ENCODE measurements at regions of chr7 and their contacts with region 1.

Region 1: DNA sequence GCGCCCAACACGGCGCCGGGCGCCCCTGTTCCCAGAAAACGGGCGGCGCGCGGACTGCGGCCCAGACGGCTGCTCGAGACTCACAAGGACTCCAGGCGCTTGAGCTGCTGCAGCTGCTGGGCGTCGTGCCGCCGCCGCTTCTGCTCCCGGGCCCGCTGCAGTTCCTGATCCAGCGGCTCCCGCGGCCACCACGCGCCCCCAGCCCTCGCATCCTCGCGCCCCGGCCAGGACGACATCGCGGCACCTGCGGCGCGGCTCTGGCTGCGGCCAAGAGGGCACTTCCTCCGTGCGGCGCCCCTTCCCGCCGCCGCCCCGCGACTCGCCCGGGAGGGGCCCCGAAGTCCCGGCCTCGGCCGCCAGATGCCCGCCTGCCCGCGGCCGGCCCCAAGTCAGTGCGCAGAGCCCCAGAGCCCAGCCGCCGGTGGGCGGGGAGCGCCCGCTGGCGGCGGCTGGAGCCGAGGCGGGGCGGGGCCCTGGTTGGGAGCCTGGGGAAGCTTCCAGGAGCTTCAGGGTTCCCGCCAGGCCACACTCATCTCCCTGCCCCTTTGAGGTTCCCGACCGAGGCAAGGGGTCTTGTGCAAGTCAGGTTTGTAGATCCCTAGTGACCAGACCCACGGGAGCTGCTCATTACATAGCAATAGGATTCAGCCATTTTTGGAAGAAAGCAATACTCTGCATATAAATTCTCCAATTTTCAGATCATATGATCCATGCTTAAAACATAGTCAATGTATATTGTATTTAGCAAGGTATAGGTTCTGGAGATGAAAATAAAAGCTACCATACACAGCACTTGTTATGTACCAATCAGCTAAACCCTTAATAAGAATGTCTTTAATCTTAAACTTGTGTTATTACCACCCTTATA is 14.2 kb upstream of the FKBP9 start:
- DNase-seq: peak; percentile 25 to 81 (median 67)
- ATAC-seq: peak; percentile 86
- H3K4me3 ChIP-seq: peak overlapping the region; percentile 55 to 66
- H3K4me3 Mint-ChIP-seq: peak overlapping the region; percentile 78
- H3K27ac ChIP-seq: peak overlapping the region in 1 of 2 experiments; percentile 30
- H3K27ac Mint-ChIP-seq: no peak overlapping the region
- H3K4me1 ChIP-seq: peaks cover 16% of the 10 kb centered on the region
- H3K4me1 Mint-ChIP-seq: peaks cover 8% of the 10 kb centered on the region
- H3K27me3 ChIP-seq: no peaks in the 10 kb centered on the region
- H3K27me3 Mint-ChIP-seq: peaks cover 10% of the 10 kb centered on the region
- CTCF ChIP-seq: peak; percentile 74

Region 2: DNA sequence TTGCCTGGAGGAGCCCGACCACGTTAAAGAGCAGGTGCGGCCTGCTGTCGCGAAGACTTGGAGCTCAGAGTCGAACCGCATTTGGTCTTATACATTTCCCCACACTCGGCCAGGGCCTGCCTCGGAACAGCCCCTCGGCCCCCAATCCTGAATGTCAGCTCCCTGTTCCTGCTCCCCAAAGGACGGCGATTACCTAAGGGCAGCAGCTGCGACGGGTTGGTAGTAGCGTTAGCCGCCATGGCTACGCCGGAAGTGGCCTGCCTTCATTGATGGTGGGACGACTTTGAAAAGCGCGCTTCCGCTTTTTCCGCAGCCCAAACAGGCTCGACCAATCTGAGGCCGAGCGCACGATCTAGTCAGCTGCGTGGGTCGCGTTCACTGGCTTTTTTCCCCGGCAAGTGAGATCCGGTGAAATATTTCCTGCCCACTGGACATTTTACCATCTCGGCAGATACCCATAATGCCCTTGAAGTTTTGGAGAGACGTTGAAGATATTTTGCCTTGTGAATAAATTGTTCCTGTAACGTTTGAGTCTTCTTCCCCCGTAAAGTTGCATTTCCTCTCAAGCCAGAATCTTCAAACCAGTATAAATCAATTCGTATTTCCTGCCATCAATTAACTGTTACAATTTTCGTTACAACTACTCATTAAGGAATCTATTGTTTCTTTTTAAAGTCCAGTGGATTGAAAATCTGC is 452.7 kb before region 1 on chr7 and contains the start of gene LSM5:
- CTCF ChIA-PET with region 1: no interaction called
- POLR2A ChIA-PET with region 1: no interaction called
- intact Hi-C with region 1: loop called (anchors 2 kb)
- DNase-seq: peak; percentile 78 to 96 (median 89)
- ATAC-seq: peak; percentile 60
- H3K4me3 ChIP-seq: peak within 1 kb of the TSS; percentile 75 to 79
- H3K4me3 Mint-ChIP-seq: peak within 1 kb of the TSS; percentile 86
- H3K27ac ChIP-seq: peak within 1 kb of the TSS; percentile 85
- H3K27ac Mint-ChIP-seq: peak within 1 kb of the TSS; percentile 98
- H3K4me1 ChIP-seq: peaks cover 19% of the 10 kb centered on the region
- H3K4me1 Mint-ChIP-seq: peaks cover 29% of the 10 kb centered on the region
- H3K27me3 ChIP-seq: no peaks in the 10 kb centered on the region
- H3K27me3 Mint-ChIP-seq: no peaks in the 10 kb centered on the region
- CTCF ChIP-seq: no peak
- total RNA-seq, gene LSM5: 32.1 to 38.6 TPM

Region 3: DNA sequence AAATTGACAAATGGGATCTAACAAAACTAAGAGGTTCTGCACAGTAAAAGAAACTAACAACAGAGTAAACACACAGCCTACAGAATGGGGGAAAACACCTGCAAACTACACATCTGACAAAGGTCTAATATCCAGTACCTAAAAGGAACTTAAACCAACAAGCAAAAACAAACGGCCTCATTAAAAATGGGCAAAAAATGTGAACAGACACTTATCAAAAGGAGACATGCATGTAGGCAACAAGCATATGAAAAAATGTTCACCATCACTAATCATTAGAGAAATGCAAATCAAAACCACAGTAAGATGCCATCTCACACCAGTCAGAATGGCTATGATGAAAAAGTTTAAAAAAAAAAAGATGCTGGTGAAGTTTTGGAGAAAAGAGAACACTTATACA is 248.8 kb before region 1 on chr7:
- CTCF ChIA-PET with region 1: no interaction called
- POLR2A ChIA-PET with region 1: no interaction called
- intact Hi-C with region 1: loop called in 1 of 2 experiments (anchors 10 kb)
- DNase-seq: no peak
- ATAC-seq: no peak
- H3K4me3 ChIP-seq: no peak overlapping the region
- H3K4me3 Mint-ChIP-seq: no peak overlapping the region
- H3K27ac ChIP-seq: no peak overlapping the region
- H3K27ac Mint-ChIP-seq: no peak overlapping the region
- H3K4me1 ChIP-seq: no peaks in the 10 kb centered on the region
- H3K4me1 Mint-ChIP-seq: peaks cover 6% of the 10 kb centered on the region
- H3K27me3 ChIP-seq: no peaks in the 10 kb centered on the region
- H3K27me3 Mint-ChIP-seq: no peaks in the 10 kb centered on the region
- CTCF ChIP-seq: no peak

Region 4: DNA sequence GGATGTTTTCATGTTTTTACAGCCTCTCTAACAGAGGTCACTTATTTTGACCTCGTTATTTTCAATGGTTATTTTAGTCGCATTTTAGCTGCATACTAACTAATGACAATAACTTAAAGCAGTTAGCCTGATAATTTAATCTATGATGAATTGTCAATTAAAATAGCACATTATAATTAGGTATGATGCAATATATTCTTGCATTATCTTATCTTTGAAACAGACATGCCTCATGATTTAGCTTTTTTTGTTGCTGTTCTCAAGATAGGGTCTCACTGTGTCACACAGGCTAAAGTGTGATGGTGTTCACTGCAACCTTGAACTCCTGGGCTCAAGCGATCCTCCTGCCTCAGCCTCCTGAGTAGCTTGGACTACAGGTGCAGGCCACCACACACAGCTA is 177.8 kb before region 1 on chr7:
- CTCF ChIA-PET with region 1: interaction called, 4 read pairs
- POLR2A ChIA-PET with region 1: no interaction called
- intact Hi-C with region 1: loop called in 1 of 2 experiments (anchors 1 kb)
- DNase-seq: no peak
- ATAC-seq: no peak
- H3K4me3 ChIP-seq: no peak overlapping the region
- H3K4me3 Mint-ChIP-seq: no peak overlapping the region
- H3K27ac ChIP-seq: no peak overlapping the region
- H3K27ac Mint-ChIP-seq: no peak overlapping the region
- H3K4me1 ChIP-seq: peaks cover 4% of the 10 kb centered on the region
- H3K4me1 Mint-ChIP-seq: peaks cover 12% of the 10 kb centered on the region
- H3K27me3 ChIP-seq: peaks cover 0 to 7% of the 10 kb centered on the region in 2 experiments
- H3K27me3 Mint-ChIP-seq: peaks cover 39% of the 10 kb centered on the region
- CTCF ChIP-seq: no peak

Region 5: DNA sequence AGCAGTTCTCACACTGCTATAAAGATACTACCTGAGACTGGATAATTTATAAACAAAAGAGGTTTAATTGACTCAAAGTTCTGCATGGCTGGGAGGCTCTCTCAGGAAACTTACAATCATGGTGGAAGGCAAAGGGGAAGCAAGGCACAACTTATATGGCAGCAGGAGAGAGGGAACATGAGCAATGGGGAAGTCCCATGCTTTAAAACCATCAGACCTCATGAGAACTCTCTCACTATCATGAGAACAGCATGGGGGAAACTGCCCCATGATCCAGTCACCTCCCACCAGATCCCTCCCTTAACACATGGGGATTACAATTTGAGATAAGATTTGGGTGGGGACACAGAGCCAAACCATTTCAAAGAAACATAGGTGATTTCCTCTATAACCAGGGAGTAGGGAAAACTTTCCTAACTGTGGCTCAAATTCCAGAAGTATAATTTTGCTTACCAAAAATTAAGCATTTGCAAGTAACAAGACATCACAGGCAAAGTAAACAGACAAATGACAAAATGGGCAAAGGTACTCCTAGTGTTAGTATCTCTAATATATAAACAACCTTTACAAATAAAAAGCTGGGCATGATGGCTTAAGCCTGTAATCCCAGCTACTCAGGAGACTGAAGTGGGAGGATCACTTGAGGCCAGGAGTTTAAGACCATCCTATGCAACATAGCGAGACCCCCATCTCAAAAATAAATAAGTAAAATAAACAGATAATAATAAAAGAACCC is 139.4 kb before region 1 on chr7:
- CTCF ChIA-PET with region 1: interaction called, 7 read pairs
- POLR2A ChIA-PET with region 1: no interaction called
- intact Hi-C with region 1: loop called in 1 of 2 experiments (anchors 2 kb)
- DNase-seq: no peak
- ATAC-seq: no peak
- H3K4me3 ChIP-seq: no peak overlapping the region
- H3K4me3 Mint-ChIP-seq: no peak overlapping the region
- H3K27ac ChIP-seq: no peak overlapping the region
- H3K27ac Mint-ChIP-seq: no peak overlapping the region
- H3K4me1 ChIP-seq: no peaks in the 10 kb centered on the region
- H3K4me1 Mint-ChIP-seq: no peaks in the 10 kb centered on the region
- H3K27me3 ChIP-seq: no peaks in the 10 kb centered on the region
- H3K27me3 Mint-ChIP-seq: peaks cover 2% of the 10 kb centered on the region
- CTCF ChIP-seq: no peak

Region 6: GRCh38 chr7:32905175-32905662 is 37.8 kb before region 1 on chr7:
- CTCF ChIA-PET with region 1: interaction called, 3 read pairs
- POLR2A ChIA-PET with region 1: no interaction called
- intact Hi-C with region 1: loop called in 1 of 2 experiments (anchors 5 kb)
- DNase-seq: peak; percentile 37 to 92 (median 66)
- ATAC-seq: peak; percentile 83
- H3K4me3 ChIP-seq: peak overlapping the region; percentile 28 to 42
- H3K4me3 Mint-ChIP-seq: peak overlapping the region; percentile 81
- H3K27ac ChIP-seq: peak overlapping the region; percentile 72 to 73
- H3K27ac Mint-ChIP-seq: peak overlapping the region; percentile 91
- H3K4me1 ChIP-seq: peaks cover 13% of the 10 kb centered on the region
- H3K4me1 Mint-ChIP-seq: peaks cover 13% of the 10 kb centered on the region
- H3K27me3 ChIP-seq: no peaks in the 10 kb centered on the region
- H3K27me3 Mint-ChIP-seq: no peaks in the 10 kb centered on the region
- CTCF ChIP-seq: no peak